MCF 10A (cell line): ENCODE measurements at regions of chr21 and their contacts with region 1.

Region 1: DNA sequence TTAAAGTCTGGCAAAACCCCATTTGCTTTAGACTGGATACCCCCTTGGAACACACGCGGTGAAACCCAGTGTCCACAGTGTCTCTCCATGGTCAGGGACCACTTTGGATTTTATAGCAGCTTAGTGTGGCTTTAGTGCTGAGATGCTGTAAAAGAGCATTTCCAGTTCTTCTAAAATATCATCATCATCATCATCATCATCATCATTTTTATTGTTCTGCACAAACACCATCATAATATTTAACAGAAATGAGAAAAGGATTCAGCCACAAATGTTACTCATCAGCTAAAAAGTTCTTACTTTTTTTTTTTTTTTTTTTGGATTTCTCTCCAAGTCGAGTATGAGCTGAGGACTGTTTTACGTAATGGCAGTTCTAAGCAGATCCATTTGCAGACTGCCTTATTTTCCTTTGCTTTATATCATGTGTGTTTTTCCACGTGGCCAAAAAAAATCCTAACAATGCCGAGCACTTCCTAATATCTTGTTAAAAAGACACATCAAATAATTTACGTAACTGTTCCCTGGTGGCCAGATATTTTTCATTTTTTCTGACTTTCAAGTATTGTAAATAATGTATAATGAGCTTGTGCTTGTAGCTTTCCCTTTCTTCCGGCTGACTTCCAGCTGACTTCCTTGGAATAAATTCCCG is 62.8 kb downstream of the EVA1C start:
- DNase-seq: no peak
- H3K4me3 Mint-ChIP-seq: no peak overlapping the region
- H3K27ac Mint-ChIP-seq: peak overlapping the region; percentile 51
- H3K4me1 Mint-ChIP-seq: peaks cover 23% of the 10 kb centered on the region
- H3K27me3 Mint-ChIP-seq: no peaks in the 10 kb centered on the region
- CTCF ChIP-seq: no peak

Region 2: GRCh38 chr21:32403201-32403777 is 72.0 kb before region 1 on chr21:
- CTCF ChIA-PET with region 1: interaction called, 11 read pairs
- POLR2A ChIA-PET with region 1: no interaction called
- intact Hi-C with region 1: no loop called
- DNase-seq: peak; percentile 81
- H3K4me3 Mint-ChIP-seq: no peak overlapping the region
- H3K27ac Mint-ChIP-seq: no peak overlapping the region
- H3K4me1 Mint-ChIP-seq: no peaks in the 10 kb centered on the region
- H3K27me3 Mint-ChIP-seq: peaks cover 12% of the 10 kb centered on the region
- CTCF ChIP-seq: peak; percentile 66